H1 (cell line): ENCODE measurements at regions of chr1 and their contacts with region 1.

Region 1: GRCh38 chr1:156797212-156797871 is 19.3 kb downstream of the SH2D2A start:
- DNase-seq: no peak
- H3K4me3 ChIP-seq: no peak overlapping the region
- H3K27ac ChIP-seq: no peak overlapping the region
- H3K4me1 ChIP-seq: no peaks in the 10 kb centered on the region
- H3K27me3 ChIP-seq: no peaks in the 10 kb centered on the region
- CTCF ChIP-seq: peak in 2 of 3 experiments; percentile 84 to 85; a peak in 3 of 4 replicates
- EP300 ChIP-seq: no peak
- POLR2A ChIP-seq: no peak
- RAD21 ChIP-seq: peak; percentile 81 to 83

Region 2: DNA sequence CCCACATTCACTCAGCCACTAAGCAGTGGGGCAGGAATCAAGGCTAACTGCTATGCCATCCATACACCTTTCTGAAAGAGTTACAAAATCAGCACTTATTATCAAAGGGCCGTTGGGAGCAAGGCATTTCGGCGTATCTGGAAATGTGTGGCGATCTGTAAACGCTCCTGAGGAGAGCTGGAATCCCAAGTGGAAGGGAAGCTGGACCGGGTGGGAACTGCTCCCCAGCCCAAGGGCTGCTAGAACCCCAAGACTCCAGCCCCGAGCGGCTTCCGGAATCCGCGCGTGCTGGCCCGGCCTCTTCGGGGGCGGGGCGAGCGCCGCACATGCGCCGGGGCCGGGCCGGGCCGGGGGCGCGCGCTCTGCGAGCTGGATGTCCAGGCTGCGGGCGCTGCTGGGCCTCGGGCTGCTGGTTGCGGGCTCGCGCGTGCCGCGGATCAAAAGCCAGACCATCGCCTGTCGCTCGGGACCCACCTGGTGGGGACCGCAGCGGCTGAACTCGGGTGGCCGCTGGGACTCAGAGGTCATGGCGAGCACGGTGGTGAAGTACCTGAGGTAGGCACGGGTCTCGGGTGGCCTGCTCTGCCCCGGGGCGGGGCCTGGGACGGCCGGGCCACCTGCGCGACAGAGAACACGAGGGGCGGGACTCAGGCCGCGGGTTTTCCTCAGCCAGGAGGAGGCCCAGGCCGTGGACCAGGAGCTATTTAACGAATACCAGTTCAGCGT is 205.7 kb before region 1 on chr1 and contains the start of gene NAXE:
- CTCF ChIA-PET with region 1: no interaction called
- POLR2A ChIA-PET with region 1: no interaction called
- DNase-seq: peak in 1 of 2 experiments; percentile 80
- H3K4me3 ChIP-seq: peak within 1 kb of the TSS; percentile 62 to 87 (median 81)
- H3K27ac ChIP-seq: peak within 1 kb of the TSS; percentile 26; the same call in 1 of the 2 replicates
- H3K4me1 ChIP-seq: peaks cover 0 to 10% (median 2%) of the 10 kb centered on the region in 4 experiments; a peak in 4 of 7 replicates
- H3K27me3 ChIP-seq: no peaks in the 10 kb centered on the region
- CTCF ChIP-seq: no peak
- EP300 ChIP-seq: no peak
- POLR2A ChIP-seq: peak; percentile 64; a peak in 2 of 3 replicates
- RAD21 ChIP-seq: no peak
- total RNA-seq, gene NAXE: 73.1 and 75.4 TPM in 2 replicates

Region 3: GRCh38 chr1:156773607-156774006 is 23.7 kb before region 1 on chr1:
- CTCF ChIA-PET with region 1: interaction called, 30 read pairs
- POLR2A ChIA-PET with region 1: interaction called, 5 read pairs
- DNase-seq: no peak
- H3K4me3 ChIP-seq: no peak overlapping the region
- H3K27ac ChIP-seq: no peak overlapping the region
- H3K4me1 ChIP-seq: peaks cover 0 to 5% (median 2%) of the 10 kb centered on the region in 4 experiments; a peak in 3 of 7 replicates
- H3K27me3 ChIP-seq: no peaks in the 10 kb centered on the region
- CTCF ChIP-seq: no peak
- EP300 ChIP-seq: no peak
- POLR2A ChIP-seq: no peak
- RAD21 ChIP-seq: no peak

Region 4: GRCh38 chr1:156781585-156782186 is 15.7 kb before region 1 on chr1:
- CTCF ChIA-PET with region 1: interaction called, 13 read pairs
- POLR2A ChIA-PET with region 1: interaction called, 4 read pairs
- DNase-seq: no peak
- H3K4me3 ChIP-seq: no peak overlapping the region
- H3K27ac ChIP-seq: no peak overlapping the region
- H3K4me1 ChIP-seq: no peaks in the 10 kb centered on the region
- H3K27me3 ChIP-seq: no peaks in the 10 kb centered on the region
- CTCF ChIP-seq: no peak
- EP300 ChIP-seq: no peak
- POLR2A ChIP-seq: no peak
- RAD21 ChIP-seq: no peak

Region 5: DNA sequence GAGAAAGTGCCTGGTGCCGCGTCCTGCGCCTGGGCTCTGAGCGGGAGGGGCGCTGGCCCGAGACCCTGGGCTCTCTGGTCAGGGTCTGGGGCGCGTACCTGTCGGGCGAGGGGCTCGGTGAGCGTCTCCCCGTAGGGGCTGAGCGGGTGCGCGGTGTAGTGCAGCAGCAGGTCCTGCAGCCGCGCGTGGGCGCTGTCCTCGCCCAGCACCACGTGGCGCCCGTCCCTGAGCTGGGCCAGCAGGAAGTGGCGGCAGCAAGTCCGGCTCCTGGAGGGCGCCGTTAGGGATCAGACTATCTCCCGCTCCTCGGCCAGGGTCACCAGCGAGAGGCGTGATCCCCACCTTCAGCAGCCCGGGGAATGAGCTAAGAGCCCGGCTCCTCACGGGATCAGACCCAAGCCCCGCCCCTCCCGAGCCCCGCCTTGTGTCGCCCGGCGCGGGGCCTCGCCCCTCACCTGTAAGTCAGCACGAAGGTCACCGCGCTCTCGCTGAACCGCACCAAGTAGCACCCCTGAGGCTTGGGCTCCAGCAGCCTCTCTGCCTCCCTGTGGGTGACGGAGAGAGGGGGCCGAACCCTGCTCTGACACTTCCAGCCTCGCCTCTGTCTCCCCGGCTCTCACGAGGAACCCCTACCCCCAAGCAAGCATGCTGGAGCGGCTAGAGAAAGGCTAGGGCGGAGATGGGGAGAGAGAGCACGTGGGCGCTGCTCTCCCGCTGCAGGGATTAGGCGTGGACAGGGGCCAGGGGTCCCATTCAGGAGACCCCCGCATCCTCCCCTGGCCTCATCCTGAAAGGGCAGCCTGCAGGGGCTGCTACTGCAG is 16.6 kb after region 1 on chr1:
- CTCF ChIA-PET with region 1: interaction called, 109 read pairs
- POLR2A ChIA-PET with region 1: interaction called, 6 read pairs
- DNase-seq: peak; percentile 68 to 91
- H3K4me3 ChIP-seq: peak overlapping the region; percentile 3 to 55 (median 38)
- H3K27ac ChIP-seq: no peak overlapping the region
- H3K4me1 ChIP-seq: peaks cover 0 to 11% (median 5%) of the 10 kb centered on the region in 4 experiments; a peak in 6 of 7 replicates
- H3K27me3 ChIP-seq: peaks cover 1 to 48% (median 42%) of the 10 kb centered on the region in 4 experiments
- CTCF ChIP-seq: peak; percentile 37 to 70 (median 59); a peak in 3 of 4 replicates
- EP300 ChIP-seq: no peak
- POLR2A ChIP-seq: peak in 1 of 2 experiments; percentile 75; a peak in 2 of 3 replicates
- RAD21 ChIP-seq: peak in 1 of 2 experiments; percentile 14; a peak in 1 of 4 replicates

Region 6: DNA sequence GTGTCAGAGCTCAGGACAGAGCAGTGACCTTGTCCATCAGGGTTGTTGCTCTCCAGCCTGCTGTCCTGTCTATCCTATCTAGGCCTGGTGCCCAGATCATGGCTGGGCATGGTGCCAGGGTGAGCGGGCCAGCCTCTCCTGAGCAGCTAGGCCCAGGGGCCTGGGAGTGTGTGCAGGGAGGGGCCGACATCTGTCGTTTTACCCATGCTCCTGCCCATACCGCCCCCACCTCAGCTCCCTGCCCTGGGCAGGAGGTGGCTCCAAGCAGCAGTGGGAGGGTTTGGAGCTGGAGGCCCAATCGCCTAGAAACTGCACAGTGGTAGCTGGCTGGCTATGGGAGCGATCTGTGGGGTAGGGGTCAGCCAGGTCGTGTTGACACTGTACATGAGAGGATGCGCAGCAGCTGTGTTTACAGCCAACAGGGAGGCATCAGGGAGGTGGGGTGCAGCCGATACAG is 55.1 kb after region 1 on chr1:
- CTCF ChIA-PET with region 1: interaction called, 38 read pairs
- POLR2A ChIA-PET with region 1: no interaction called
- DNase-seq: no peak
- H3K4me3 ChIP-seq: no peak overlapping the region
- H3K27ac ChIP-seq: no peak overlapping the region
- H3K4me1 ChIP-seq: peaks cover 0 to 16% (median 2%) of the 10 kb centered on the region in 4 experiments; a peak in 5 of 7 replicates
- H3K27me3 ChIP-seq: peaks cover 28 to 78% (median 48%) of the 10 kb centered on the region in 4 experiments
- CTCF ChIP-seq: no peak
- EP300 ChIP-seq: no peak
- POLR2A ChIP-seq: no peak
- RAD21 ChIP-seq: no peak